Mammary epithelial cell (primary cell): ENCODE measurements at regions of chr17 and their contacts with region 1.

Region 1: DNA sequence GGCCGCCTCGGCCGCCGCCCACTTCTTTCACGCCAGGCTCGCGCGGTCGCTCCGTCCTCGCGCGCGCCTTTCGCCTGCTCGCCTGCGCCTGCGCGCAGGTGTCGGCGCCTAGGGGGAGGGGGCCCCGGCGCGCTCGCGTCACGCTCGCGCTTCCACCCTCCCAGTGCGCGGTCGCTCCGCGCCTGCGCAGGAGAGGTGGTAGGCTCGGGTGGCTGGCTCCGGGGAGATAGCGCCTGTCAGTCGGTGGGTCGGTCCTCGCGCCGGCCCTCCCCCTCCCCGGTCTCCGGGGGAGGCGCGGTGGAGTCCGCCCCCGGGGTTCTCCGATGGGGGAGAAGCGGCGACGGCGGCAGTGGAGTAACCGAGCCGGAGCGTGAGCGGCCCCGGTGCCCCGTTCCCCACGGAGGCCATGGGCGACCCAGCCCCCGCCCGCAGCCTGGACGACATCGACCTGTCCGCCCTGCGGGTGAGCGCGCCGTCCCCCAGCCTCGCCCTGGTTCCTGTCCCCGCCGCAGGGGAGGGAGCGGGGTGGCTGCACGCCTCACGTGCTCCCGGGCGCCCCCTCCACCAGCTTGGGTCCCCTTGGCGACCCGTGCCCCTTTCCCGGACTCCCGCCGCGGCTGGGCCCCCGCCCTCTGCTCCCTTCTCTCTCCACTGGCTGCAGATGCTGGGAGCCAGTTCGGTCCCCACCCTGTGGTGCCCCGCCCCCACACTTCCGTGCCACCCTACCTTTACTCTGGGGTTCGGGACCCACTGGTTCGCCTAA is at the start of gene MINK1:
- DNase-seq: peak; percentile 95
- H3K4me3 ChIP-seq: peak within 1 kb of the TSS; percentile 69 to 91 (median 75)
- H3K27ac ChIP-seq: peak within 1 kb of the TSS; percentile 95
- H3K4me1 ChIP-seq: peaks cover 18% of the 10 kb centered on the region
- H3K27me3 ChIP-seq: no peaks in the 10 kb centered on the region
- CTCF ChIP-seq: no peak
- total RNA-seq, gene MINK1: 71.0 to 201 TPM

Region 2: GRCh38 chr17:4709794-4710692 is 123.3 kb before region 1 on chr17 and contains the start of gene ARRB2:
- CTCF ChIA-PET with region 1: no interaction called
- dilution Hi-C with region 1: no loop called
- in situ Hi-C with region 1: no loop called
- intact Hi-C with region 1: loop called (anchors 1 kb)
- DNase-seq: peak; percentile 98
- H3K4me3 ChIP-seq: peak within 1 kb of the TSS; percentile 50 to 63 (median 63)
- H3K27ac ChIP-seq: peak within 1 kb of the TSS; percentile 14
- H3K4me1 ChIP-seq: peaks cover 14% of the 10 kb centered on the region
- H3K27me3 ChIP-seq: no peaks in the 10 kb centered on the region
- CTCF ChIP-seq: peak; percentile 35 to 72
- total RNA-seq, gene ARRB2: 3.5 to 14.4 TPM

Region 3: GRCh38 chr17:4733073-4733531 is 100.3 kb before region 1 on chr17:
- CTCF ChIA-PET with region 1: no interaction called
- dilution Hi-C with region 1: no loop called
- in situ Hi-C with region 1: no loop called
- intact Hi-C with region 1: no loop called
- DNase-seq: no peak
- H3K4me3 ChIP-seq: no peak overlapping the region
- H3K27ac ChIP-seq: no peak overlapping the region
- H3K4me1 ChIP-seq: peaks cover 5% of the 10 kb centered on the region
- H3K27me3 ChIP-seq: no peaks in the 10 kb centered on the region
- CTCF ChIP-seq: no peak

Region 4: GRCh38 chr17:4796553-4796921 is 36.8 kb before region 1 on chr17:
- CTCF ChIA-PET with region 1: no interaction called
- dilution Hi-C with region 1: no loop called
- in situ Hi-C with region 1: no loop called
- intact Hi-C with region 1: loop called (anchors 2 kb)
- DNase-seq: peak; percentile 27
- H3K4me3 ChIP-seq: peak overlapping the region; percentile 84 to 96 (median 85)
- H3K27ac ChIP-seq: peak overlapping the region; percentile 74
- H3K4me1 ChIP-seq: peaks cover 7% of the 10 kb centered on the region
- H3K27me3 ChIP-seq: no peaks in the 10 kb centered on the region
- CTCF ChIP-seq: no peak

Region 5: DNA sequence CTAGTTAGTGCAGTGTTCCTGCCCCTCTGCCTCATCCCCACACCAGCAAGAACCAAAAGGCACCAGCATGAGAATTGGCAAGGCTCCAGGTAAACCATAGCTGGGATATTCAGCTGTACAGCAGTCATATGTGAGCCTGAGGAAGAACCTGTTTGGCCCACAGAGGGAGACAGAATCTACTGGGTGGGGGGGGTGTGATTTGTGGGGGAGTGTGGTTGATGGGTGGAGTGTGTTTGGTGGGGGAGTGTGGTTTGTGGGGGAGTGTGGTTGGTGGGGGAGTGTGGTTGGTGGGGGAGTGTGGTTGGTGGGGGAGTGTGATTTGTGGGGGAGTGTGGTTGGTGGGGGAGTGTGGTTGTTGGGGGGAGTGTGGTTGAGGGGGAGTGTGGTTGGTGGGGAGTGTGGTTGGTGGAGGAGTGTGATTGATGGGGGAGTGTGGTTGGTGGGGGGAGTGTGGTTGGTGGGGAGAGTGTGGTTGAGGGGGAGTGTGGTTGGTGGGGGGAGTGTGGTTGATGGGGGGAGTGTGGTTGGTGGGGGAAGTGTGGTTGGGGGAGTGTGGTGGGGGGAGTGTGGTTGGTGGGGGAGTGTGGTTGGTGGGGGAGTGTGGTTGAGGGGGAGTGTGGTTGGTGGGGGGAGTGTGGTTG is 19.3 kb after region 1 on chr17:
- CTCF ChIA-PET with region 1: no interaction called
- dilution Hi-C with region 1: no loop called
- in situ Hi-C with region 1: no loop called
- intact Hi-C with region 1: loop called (anchors 1 kb)
- DNase-seq: peak; percentile 59
- H3K4me3 ChIP-seq: no peak overlapping the region
- H3K27ac ChIP-seq: peak overlapping the region; percentile 8
- H3K4me1 ChIP-seq: peaks cover 76% of the 10 kb centered on the region
- H3K27me3 ChIP-seq: no peaks in the 10 kb centered on the region
- CTCF ChIP-seq: peak in 1 of 2 donors; percentile 30

Region 6: DNA sequence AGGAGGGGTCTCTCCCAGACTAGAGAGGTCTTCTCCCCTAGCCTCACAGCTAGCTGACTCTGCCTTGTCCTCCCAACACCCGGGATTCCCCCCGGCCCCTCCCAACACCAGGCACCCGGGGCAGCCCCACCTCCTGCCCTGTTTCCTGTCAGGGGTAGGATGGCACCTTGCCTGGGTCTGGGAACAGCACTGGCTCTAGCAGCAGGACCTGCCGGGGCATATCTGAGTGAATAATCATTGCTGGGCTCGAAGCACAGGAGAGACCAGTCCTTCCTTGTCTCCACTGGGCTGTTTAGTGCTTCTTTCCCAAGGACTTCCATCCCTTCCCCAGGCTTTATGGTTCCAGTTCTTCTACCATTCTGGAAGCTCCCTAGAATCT is 25.5 kb after region 1 on chr17:
- CTCF ChIA-PET with region 1: interaction called, 3 read pairs
- dilution Hi-C with region 1: no loop called
- in situ Hi-C with region 1: no loop called
- intact Hi-C with region 1: loop called (anchors 1 kb)
- DNase-seq: peak; percentile 93
- H3K4me3 ChIP-seq: peak overlapping the region; percentile 50 to 91 (median 78)
- H3K27ac ChIP-seq: peak overlapping the region; percentile 83
- H3K4me1 ChIP-seq: peaks cover 60% of the 10 kb centered on the region
- H3K27me3 ChIP-seq: no peaks in the 10 kb centered on the region
- CTCF ChIP-seq: no peak

Region 7: DNA sequence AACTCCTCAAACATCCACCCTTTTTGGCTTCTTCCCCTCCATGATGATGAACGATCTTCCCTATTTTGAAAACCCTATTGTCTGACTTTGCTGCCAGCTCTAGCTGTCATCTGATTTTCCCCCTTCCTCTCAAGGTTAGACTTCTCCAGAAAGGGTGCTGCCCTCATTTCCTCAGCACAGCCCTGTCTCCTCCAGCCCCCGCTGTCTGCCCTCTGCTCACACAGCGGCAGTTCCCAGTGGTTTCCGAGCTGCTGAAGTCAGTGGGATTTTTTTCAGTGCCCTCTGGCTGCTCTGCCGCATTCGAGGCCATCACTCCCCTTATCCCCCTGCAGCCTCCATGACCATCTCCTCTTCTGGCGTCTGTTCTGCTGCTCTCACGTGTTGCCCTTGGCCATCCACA is 39.4 kb after region 1 on chr17:
- CTCF ChIA-PET with region 1: interaction called, 15 read pairs
- dilution Hi-C with region 1: no loop called
- in situ Hi-C with region 1: no loop called
- intact Hi-C with region 1: no loop called
- DNase-seq: no peak
- H3K4me3 ChIP-seq: no peak overlapping the region
- H3K27ac ChIP-seq: no peak overlapping the region
- H3K4me1 ChIP-seq: peaks cover 8% of the 10 kb centered on the region
- H3K27me3 ChIP-seq: no peaks in the 10 kb centered on the region
- CTCF ChIP-seq: no peak

Region 8: DNA sequence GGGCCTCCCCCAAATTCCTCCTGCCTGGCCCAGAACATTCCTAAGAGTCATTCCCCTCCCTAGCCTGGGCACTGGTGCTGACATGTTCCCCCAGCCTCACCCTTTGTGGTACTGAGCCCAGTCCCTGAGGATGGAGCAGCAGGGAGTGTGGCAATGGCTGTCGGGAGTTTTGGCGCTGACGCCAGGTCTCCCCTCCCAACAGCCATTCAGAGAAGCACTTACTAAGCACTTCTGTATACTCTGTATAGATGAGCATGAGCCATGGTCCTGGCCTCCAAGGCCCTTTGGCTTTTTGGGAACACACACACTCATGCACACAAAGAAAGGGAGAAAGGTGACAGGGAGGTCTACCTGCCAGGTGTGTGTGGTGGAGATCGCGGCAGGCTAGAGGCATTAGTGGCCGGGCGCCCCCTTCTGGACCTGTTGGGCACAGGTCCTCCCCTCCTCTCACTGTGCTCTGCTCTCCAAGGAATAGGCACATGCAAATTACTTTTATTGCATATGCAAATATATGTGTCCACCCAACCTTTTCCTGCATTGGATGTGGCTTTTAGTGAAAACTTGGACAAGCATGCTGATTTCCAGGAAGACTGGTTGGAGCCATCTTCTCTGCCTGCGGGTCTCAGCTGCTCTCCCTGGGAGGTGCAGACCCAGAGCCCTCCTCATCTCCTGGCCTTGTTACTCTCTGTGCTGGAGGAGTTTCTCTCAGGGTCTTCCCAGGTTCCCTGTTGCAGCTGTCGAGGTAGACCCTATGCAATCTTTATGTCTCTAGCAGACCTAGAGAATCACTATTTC is 48.6 kb after region 1 on chr17:
- CTCF ChIA-PET with region 1: no interaction called
- dilution Hi-C with region 1: no loop called
- in situ Hi-C with region 1: no loop called
- intact Hi-C with region 1: loop called (anchors 1 kb)
- DNase-seq: peak; percentile 63
- H3K4me3 ChIP-seq: no peak overlapping the region
- H3K27ac ChIP-seq: no peak overlapping the region
- H3K4me1 ChIP-seq: peaks cover 5% of the 10 kb centered on the region
- H3K27me3 ChIP-seq: no peaks in the 10 kb centered on the region
- CTCF ChIP-seq: peak; percentile 88 to 91